ENCODE measurements at regions of chr17 and their contacts with region 1.

Region 1: DNA sequence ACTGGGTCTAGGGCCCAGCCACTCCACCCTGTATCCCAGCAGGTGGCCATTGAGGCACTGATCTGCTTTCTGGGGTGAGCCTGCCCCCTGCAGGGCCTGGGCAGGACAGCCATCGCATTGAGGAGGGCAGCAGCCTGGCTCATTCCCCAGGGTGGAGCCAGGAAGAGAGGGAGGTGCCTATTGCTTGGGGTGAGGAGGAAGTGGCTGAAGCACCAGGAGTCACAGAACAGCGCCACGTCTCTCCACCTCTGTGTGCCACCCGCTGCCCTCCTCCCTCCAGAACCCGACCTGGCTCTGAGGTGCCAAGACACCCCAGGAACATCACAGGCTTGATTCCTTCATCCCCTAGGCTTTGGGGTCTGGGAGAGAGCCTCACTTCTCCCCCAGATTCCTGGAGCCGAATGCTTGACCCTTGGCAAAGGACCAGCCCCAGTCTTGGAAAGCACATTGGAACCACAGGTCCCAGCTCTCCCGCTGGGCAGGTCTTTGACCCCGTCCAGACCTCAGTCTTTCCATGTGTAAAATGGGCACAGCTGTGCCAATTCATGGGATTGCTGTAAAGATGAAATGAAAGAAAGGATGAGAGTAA is 7.2 kb upstream of the KRT36 start:
- DNase-seq: peak; percentile 43 to 61 (median 56)
- H3K4me3 ChIP-seq: no peak overlapping the region
- H3K4me3 Mint-ChIP-seq: peak overlapping the region in 3 of 8 donors; percentile 42 to 64 (median 51)
- H3K27ac ChIP-seq: no peak overlapping the region
- H3K27ac Mint-ChIP-seq: peak overlapping the region in 4 of 7 donors; percentile 72 to 80 (median 75)
- H3K4me1 ChIP-seq: peaks cover 11% of the 10 kb centered on the region
- H3K4me1 Mint-ChIP-seq: peaks cover 7 to 36% (median 12%) of the 10 kb centered on the region in 4 donors
- H3K27me3 ChIP-seq: no peaks in the 10 kb centered on the region
- H3K27me3 Mint-ChIP-seq: no peaks in the 10 kb centered on the region

Region 2: GRCh38 chr17:40909351-40909750 is 587.6 kb before region 1 on chr17:
- CTCF ChIA-PET with region 1: interaction called, 9 read pairs
- POLR2A ChIA-PET with region 1: no interaction called
- intact Hi-C with region 1: loop called (anchors 2 kb)
- DNase-seq: peak; percentile 48 to 69 (median 60)
- H3K4me3 ChIP-seq: no peak overlapping the region
- H3K4me3 Mint-ChIP-seq: no peak overlapping the region
- H3K27ac ChIP-seq: no peak overlapping the region
- H3K27ac Mint-ChIP-seq: no peak overlapping the region
- H3K4me1 ChIP-seq: no peaks in the 10 kb centered on the region
- H3K4me1 Mint-ChIP-seq: no peaks in the 10 kb centered on the region
- H3K27me3 ChIP-seq: no peaks in the 10 kb centered on the region
- H3K27me3 Mint-ChIP-seq: peaks cover 23 to 39% of the 10 kb centered on the region in 2 donors

Region 3: GRCh38 chr17:41121742-41122141 is 375.2 kb before region 1 on chr17:
- CTCF ChIA-PET with region 1: interaction called, 3 read pairs
- POLR2A ChIA-PET with region 1: no interaction called
- intact Hi-C with region 1: loop called (anchors 2 kb)
- DNase-seq: no peak
- H3K4me3 ChIP-seq: no peak overlapping the region
- H3K4me3 Mint-ChIP-seq: no peak overlapping the region
- H3K27ac ChIP-seq: no peak overlapping the region
- H3K27ac Mint-ChIP-seq: peak overlapping the region in 1 of 7 donors; percentile 12
- H3K4me1 ChIP-seq: peaks cover 54% of the 10 kb centered on the region
- H3K4me1 Mint-ChIP-seq: peaks cover 13 to 68% (median 50%) of the 10 kb centered on the region in 4 donors
- H3K27me3 ChIP-seq: no peaks in the 10 kb centered on the region
- H3K27me3 Mint-ChIP-seq: peaks cover 2 to 4% of the 10 kb centered on the region in 2 donors

Region 4: DNA sequence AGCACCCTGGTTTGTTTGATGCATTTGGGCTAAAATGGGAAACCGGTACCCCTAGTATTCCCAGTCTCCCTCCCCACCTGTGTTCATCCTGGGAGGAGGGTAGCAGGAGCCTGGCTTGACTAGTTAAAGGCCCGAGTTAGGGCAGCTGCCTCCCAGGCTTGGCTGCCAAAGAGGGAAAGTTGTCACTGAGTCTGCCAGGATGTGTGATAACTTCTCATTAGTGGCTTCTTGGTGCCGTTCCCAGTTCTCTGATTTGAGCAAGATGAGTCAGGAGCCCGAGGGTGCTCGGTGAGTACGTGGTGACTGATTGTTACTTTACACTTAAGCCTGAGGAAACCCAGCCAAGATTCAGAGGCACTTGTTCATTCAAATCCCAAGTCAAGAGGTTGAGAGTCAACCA is 32.2 kb before region 1 on chr17:
- CTCF ChIA-PET with region 1: no interaction called
- POLR2A ChIA-PET with region 1: no interaction called
- intact Hi-C with region 1: no loop called
- DNase-seq: no peak
- H3K4me3 ChIP-seq: no peak overlapping the region
- H3K4me3 Mint-ChIP-seq: no peak overlapping the region
- H3K27ac ChIP-seq: no peak overlapping the region
- H3K27ac Mint-ChIP-seq: peak overlapping the region in 1 of 7 donors; percentile 56
- H3K4me1 ChIP-seq: no peaks in the 10 kb centered on the region
- H3K4me1 Mint-ChIP-seq: no peaks in the 10 kb centered on the region
- H3K27me3 ChIP-seq: no peaks in the 10 kb centered on the region
- H3K27me3 Mint-ChIP-seq: no peaks in the 10 kb centered on the region

Measured in CD4-positive, alpha-beta memory T cell (primary cell).